WTC11 (cell line): ENCODE measurements at regions of chr9 and their contacts with region 1.

Region 1: GRCh38 chr9:3441197-3441816 is 84.5 kb downstream of the RFX3 start:
- DNase-seq: peak; percentile 43
- ATAC-seq: peak; percentile 89
- H3K4me3 Mint-ChIP-seq: no peak overlapping the region
- H3K27ac Mint-ChIP-seq: no peak overlapping the region
- H3K4me1 Mint-ChIP-seq: 0 out of 2 replicates have a peak, but pooled peaks cover 3% of the 10 kb centered on the region
- H3K27me3 Mint-ChIP-seq: no peaks in the 10 kb centered on the region
- CTCF ChIP-seq: peak; percentile 32; the same call in 1 of the 2 replicates

Region 2: GRCh38 chr9:3240656-3241268 is 200.5 kb before region 1 on chr9:
- CTCF ChIA-PET with region 1: interaction called, 94 read pairs
- POLR2A ChIA-PET with region 1: no interaction called
- DNase-seq: peak; percentile 77
- ATAC-seq: peak; percentile 98
- H3K4me3 Mint-ChIP-seq: no peak overlapping the region
- H3K27ac Mint-ChIP-seq: peak overlapping the region; percentile 12
- H3K4me1 Mint-ChIP-seq: peaks cover 12% of the 10 kb centered on the region
- H3K27me3 Mint-ChIP-seq: no peaks in the 10 kb centered on the region
- CTCF ChIP-seq: peak; percentile 56

Region 3: DNA sequence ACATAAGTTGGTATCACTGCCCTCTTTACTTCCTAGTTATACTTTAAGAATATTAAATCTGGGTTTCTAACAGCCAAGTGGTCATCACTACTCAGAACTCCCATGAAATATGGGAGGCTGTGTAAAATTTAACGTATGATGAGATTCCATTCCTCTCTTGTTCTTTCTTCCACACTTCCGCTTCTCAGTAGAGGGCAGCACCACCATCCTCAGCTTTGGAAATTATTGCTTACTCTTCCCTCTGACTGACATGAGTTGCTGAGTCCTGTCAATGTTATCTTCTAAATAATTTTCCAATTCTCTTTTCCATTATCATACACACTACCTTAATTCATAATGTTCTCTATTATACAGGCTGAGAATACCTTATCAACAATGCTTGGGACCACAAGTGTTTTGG is 109.5 kb before region 1 on chr9:
- CTCF ChIA-PET with region 1: interaction called, 36 read pairs
- POLR2A ChIA-PET with region 1: no interaction called
- DNase-seq: peak; percentile 12
- ATAC-seq: peak; percentile 52; the same call in 1 of the 2 replicates
- H3K4me3 Mint-ChIP-seq: no peak overlapping the region
- H3K27ac Mint-ChIP-seq: no peak overlapping the region
- H3K4me1 Mint-ChIP-seq: no peaks in the 10 kb centered on the region
- H3K27me3 Mint-ChIP-seq: no peaks in the 10 kb centered on the region
- CTCF ChIP-seq: no peak

Region 4: GRCh38 chr9:3401221-3401954 is 39.9 kb before region 1 on chr9:
- CTCF ChIA-PET with region 1: interaction called, 10 read pairs
- POLR2A ChIA-PET with region 1: interaction called, 3 read pairs
- DNase-seq: no peak
- ATAC-seq: no peak
- H3K4me3 Mint-ChIP-seq: no peak overlapping the region; the same call in 1 of the 2 replicates
- H3K27ac Mint-ChIP-seq: peak overlapping the region; percentile 16; the same call in 1 of the 2 replicates
- H3K4me1 Mint-ChIP-seq: peaks cover 39% of the 10 kb centered on the region
- H3K27me3 Mint-ChIP-seq: no peaks in the 10 kb centered on the region
- CTCF ChIP-seq: no peak

Region 5: DNA sequence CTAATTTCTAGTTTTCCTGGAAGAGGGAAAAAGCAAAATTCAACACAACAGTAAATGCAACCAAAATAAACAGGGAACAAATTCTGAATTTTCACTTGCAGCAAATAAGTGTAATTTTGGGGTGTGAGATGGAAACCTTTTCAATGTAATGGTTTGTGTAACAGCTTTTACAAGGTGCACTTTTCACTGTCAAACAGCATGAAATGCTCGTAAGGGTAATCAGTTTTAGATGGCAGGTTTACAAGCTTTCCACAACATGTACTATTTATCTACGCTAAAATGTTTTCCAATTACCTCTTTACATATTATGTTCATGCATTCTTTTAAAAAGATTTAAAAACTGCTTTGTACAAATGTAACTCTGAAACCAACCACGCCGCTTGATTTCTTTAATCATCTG is 30.8 kb before region 1 on chr9:
- CTCF ChIA-PET with region 1: interaction called, 12 read pairs
- POLR2A ChIA-PET with region 1: interaction called, 3 read pairs
- DNase-seq: no peak
- ATAC-seq: no peak
- H3K4me3 Mint-ChIP-seq: no peak overlapping the region
- H3K27ac Mint-ChIP-seq: no peak overlapping the region
- H3K4me1 Mint-ChIP-seq: no peaks in the 10 kb centered on the region
- H3K27me3 Mint-ChIP-seq: no peaks in the 10 kb centered on the region
- CTCF ChIP-seq: no peak

Region 6: DNA sequence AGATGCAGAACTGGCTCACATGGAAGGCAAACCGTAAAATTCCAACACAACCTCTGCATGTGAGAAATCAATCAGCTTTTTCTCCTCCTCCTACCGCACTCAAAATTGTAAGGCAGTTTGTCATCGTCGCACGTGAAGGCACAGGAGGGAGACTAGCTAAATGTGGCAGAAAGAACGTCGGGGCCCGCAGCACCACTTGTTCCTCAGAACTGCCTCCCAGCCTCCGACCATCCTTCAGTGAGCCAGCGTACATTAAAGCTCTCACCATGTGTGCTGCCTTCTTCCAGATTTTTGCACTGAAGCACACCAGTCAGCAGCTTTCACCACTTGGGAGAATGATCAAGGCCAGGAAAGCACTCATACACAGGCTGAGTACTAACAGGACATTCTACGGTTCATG is 21.4 kb before region 1 on chr9:
- CTCF ChIA-PET with region 1: interaction called, 11 read pairs
- POLR2A ChIA-PET with region 1: no interaction called
- DNase-seq: no peak
- ATAC-seq: no peak
- H3K4me3 Mint-ChIP-seq: no peak overlapping the region
- H3K27ac Mint-ChIP-seq: no peak overlapping the region
- H3K4me1 Mint-ChIP-seq: no peaks in the 10 kb centered on the region
- H3K27me3 Mint-ChIP-seq: no peaks in the 10 kb centered on the region
- CTCF ChIP-seq: no peak

Region 7: GRCh38 chr9:3451956-3452355 is 10.6 kb after region 1 on chr9:
- CTCF ChIA-PET with region 1: interaction called, 20 read pairs
- POLR2A ChIA-PET with region 1: no interaction called
- DNase-seq: no peak
- ATAC-seq: no peak
- H3K4me3 Mint-ChIP-seq: no peak overlapping the region
- H3K27ac Mint-ChIP-seq: no peak overlapping the region
- H3K4me1 Mint-ChIP-seq: peaks cover 11% of the 10 kb centered on the region
- H3K27me3 Mint-ChIP-seq: no peaks in the 10 kb centered on the region
- CTCF ChIP-seq: no peak